Head of caudate nucleus (tissue), 42 donors: ENCODE measurements at regions of chr12 and their contacts with region 1.

Region 1: DNA sequence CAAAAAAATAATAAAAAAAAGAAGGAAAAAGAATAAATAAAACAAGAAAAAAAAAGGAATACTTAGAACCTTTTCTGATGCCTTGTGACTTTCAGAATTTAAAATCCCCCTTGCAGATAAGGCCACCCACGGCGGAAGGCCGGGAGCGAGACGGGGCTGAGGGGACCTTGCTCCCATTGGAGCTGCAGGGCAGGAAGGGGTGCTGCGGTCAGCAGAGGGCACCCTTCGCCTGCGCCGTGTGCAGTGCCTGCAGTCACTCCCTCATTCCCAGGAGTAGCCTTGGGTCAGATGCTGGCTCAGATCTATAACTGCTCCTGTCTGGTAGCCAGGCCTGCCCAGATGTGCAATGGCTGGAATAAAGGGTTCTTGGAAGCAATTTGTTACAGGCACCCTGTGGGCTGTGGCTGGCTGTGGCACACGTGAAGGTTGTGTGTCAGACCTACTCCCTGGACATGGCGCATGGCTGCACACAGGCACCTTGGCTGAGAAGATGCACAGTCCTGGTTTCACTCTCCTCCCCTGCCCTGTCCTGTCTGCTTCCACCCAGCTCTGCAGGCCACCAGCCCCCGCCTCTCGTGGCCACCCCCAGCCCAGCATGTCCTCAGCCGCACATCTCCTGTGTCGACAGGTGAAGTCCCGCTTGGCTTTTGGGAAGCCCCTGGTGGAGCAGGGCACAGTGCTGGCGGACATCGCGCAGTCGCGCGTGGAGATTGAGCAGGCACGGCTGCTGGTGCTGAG is 13.4 kb upstream of the ALDH2 start:
- DNase-seq: peak in 41 of 42 donors; percentile 34 to 86 (median 68)

Region 2: DNA sequence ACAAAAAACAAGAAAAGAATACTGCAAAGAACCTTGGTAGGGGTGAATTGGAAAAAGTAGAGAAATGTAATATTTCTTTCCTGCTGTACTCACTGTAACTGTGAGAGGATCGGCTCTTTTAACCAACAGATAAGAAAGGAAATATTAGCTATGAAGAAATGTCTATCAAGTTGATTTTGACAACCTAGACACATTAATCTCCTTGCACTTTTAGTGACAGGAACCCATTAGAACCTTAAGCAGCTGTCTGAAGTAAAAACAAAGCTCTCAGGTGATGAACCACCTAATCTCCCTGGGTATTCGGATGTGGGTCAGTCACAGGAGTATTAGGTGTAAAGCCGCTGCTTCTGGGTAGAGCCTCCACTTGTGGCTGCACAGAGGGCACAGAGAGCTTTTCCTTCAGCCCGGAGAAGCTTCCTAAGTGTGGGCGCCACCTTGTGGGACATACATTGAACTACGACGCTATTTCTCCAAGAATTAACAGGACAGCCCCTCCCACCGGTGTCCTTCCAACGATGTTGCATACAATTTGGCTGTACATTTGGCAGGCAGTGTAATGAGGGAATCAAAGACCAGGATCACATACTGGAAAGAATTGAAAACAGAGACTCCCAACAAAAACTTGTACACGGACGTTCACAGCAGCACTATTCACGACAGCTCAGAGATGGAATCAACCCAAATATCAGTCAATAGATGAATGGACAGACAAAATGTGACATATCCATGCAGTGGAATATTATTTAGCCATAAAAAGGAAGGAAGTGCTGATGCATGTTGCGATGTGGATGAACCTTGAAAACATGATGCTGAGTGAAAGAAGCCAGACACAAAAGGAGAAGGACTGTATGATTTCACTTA is 59.8 kb after region 1 on chr12:
- intact Hi-C with region 1: loop called (anchors 10 kb)
- DNase-seq: peak; percentile 47 to 90 (median 76)